HEK293 (cell line): ENCODE measurements at regions of chr9 and their contacts with region 1.

Region 1: GRCh38 chr9:128927731-128928411 is 7.1 kb downstream of the PHYHD1 start:
- H3K4me3 ChIP-seq: no peak overlapping the region
- H3K27ac ChIP-seq: no peak overlapping the region
- H3K4me1 ChIP-seq: no peaks in the 10 kb centered on the region
- CTCF ChIP-seq: peak; percentile 65

Region 2: DNA sequence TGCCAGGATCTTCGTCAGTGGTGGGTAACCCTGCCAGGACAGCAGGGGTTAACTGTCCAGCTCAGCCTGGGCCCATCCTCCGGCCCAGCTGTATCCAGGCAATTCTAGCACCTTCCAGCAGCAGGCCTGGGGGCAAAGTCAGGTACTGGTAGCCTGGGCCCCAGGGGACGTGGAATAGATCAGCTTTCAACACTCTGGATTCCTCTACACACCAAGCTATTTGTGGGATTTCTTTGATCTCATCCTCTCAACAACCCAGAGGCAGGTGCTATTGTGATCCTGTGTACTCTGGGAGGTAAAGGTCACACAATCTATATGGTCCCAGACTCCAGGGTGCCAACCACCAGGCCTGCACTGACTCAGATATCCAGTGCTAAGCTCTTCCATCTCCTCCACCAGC is 89.5 kb before region 1 on chr9:
- CTCF ChIA-PET with region 1: interaction called, 11 read pairs
- POLR2A ChIA-PET with region 1: no interaction called
- H3K4me3 ChIP-seq: no peak overlapping the region
- H3K27ac ChIP-seq: no peak overlapping the region
- H3K4me1 ChIP-seq: no peaks in the 10 kb centered on the region
- CTCF ChIP-seq: no peak

Region 3: DNA sequence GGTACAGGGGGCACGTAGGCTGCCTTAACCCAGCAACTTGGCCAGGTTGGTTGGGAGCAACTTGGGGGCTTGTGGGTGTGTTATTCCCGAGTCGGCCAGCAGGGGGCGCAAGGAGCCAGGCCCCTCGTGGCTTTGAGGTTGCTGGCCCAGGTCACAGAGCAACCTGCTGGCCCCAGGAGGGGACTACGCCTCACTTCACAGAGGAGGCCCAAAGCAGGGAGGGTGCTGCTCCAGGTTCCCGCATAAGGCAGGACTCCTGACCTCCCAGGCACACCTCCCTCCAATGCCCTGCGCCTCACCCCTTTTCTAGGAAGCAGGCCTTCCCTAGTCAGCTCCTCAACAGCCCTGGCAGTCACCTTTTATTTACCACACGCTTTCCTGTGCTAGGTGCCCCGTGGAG is 64.2 kb before region 1 on chr9:
- CTCF ChIA-PET with region 1: interaction called, 94 read pairs
- POLR2A ChIA-PET with region 1: no interaction called
- H3K4me3 ChIP-seq: no peak overlapping the region
- H3K27ac ChIP-seq: no peak overlapping the region
- H3K4me1 ChIP-seq: no peaks in the 10 kb centered on the region; the same call in 1 of the 2 replicates
- CTCF ChIP-seq: peak; percentile 88

Region 4: GRCh38 chr9:128875790-128876160 is 52.1 kb before region 1 on chr9:
- CTCF ChIA-PET with region 1: interaction called, 22 read pairs
- POLR2A ChIA-PET with region 1: no interaction called
- H3K4me3 ChIP-seq: no peak overlapping the region
- H3K27ac ChIP-seq: no peak overlapping the region
- H3K4me1 ChIP-seq: no peaks in the 10 kb centered on the region
- CTCF ChIP-seq: no peak

Region 5: DNA sequence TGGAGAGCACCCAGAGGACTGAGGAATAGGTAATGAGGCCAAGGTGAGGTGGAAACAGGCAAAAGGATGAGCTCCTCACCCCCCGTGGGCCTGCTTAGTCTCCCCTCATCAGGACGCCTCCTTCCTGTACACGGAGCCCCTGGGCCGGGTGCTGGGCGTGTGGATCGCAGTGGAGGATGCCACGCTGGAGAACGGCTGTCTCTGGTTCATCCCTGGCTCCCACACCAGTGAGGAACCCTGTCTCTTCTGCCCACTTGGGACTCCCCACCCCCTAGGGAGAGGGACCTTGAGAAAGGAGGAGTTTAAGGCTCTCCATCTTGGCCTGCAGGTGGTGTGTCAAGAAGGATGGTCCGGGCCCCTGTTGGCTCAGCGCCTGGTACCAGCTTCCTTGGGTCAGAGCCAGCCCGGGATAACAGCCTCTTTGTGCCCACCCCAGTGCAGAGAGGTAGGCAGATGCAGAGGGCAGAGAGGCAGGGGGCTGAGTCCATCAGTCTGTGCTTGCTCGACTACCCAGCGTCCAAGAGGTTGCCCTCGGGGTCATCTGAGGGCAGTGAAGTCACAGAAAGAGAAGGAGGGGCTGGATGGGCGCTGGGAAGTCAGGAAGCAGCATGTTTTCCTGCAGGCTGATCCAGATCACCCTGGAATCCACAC is 12.5 kb after region 1 on chr9:
- CTCF ChIA-PET with region 1: interaction called, 48 read pairs
- POLR2A ChIA-PET with region 1: interaction called, 3 read pairs
- H3K4me3 ChIP-seq: no peak overlapping the region
- H3K27ac ChIP-seq: no peak overlapping the region
- H3K4me1 ChIP-seq: no peaks in the 10 kb centered on the region
- CTCF ChIP-seq: no peak